ENCODE measurements at regions of chr12 and their contacts with region 1.

Region 1: GRCh38 chr12:6278439-6279255 is 31.8 kb upstream of the PLEKHG6 start:
- DNase-seq: peak; percentile 74
- ATAC-seq: peak; percentile 81
- H3K4me3 ChIP-seq: peak overlapping the region; percentile 56
- H3K27ac ChIP-seq: peak overlapping the region; percentile 78
- H3K4me1 ChIP-seq: peaks cover 31% of the 10 kb centered on the region
- H3K27me3 ChIP-seq: no peaks in the 10 kb centered on the region
- CTCF ChIP-seq: peak; percentile 92
- POLR2A ChIP-seq: peak; percentile 50; the same call in 1 of the 2 replicates
- RAD21 ChIP-seq: peak; percentile 83

Region 2: DNA sequence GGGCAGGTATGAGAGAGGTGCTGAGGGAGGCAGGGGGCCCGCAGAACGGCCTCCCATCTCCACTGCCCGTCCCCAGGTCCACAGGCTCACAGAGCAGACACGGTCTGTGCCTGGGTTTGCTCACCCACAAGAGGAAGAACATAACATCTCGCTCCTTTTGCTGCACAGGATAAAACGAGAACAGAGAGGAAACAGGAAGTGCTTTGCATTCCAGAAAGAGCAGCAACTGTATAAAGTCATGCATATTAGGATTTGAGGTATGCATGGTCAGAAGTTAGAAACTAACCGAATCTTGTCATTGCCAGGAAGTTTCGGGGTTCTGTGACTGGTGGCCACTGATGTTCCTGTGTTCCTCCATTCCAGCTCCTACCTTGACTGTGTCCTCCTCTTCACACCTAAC is 821.7 kb before region 1 on chr12:
- CTCF ChIA-PET with region 1: no interaction called
- POLR2A ChIA-PET with region 1: no interaction called
- dilution Hi-C with region 1: no loop called
- in situ Hi-C with region 1: loop called (anchors 25 kb)
- intact Hi-C with region 1: no loop called
- DNase-seq: peak; percentile 82
- ATAC-seq: peak; percentile 94
- H3K4me3 ChIP-seq: no peak overlapping the region
- H3K27ac ChIP-seq: peak overlapping the region; percentile 98
- H3K4me1 ChIP-seq: peaks cover 47% of the 10 kb centered on the region
- H3K27me3 ChIP-seq: no peaks in the 10 kb centered on the region
- CTCF ChIP-seq: no peak
- POLR2A ChIP-seq: no peak
- RAD21 ChIP-seq: no peak

Region 3: DNA sequence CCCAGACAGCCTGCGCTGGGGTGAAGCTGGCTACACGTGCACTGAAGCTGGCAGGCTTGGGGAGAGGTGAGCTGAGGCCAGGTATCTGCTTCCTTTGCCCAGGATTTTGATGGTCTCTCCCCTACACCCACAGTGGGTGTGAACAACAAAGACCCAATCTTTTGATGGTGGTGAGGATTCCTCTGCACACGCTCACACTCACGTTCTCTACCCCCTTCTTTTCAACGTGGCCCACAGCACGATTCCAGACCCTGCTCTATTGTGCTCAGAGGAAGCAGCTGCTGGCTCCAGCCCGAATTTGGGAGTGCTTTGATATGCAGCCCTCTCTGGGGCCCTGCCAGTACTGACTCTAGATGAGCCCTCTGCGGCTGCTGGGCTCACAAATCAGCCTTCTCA is 73.5 kb before region 1 on chr12:
- CTCF ChIA-PET with region 1: interaction called, 8 read pairs
- POLR2A ChIA-PET with region 1: no interaction called
- dilution Hi-C with region 1: no loop called
- in situ Hi-C with region 1: loop called (anchors 5 kb)
- intact Hi-C with region 1: no loop called
- DNase-seq: no peak
- ATAC-seq: no peak
- H3K4me3 ChIP-seq: no peak overlapping the region
- H3K27ac ChIP-seq: no peak overlapping the region
- H3K4me1 ChIP-seq: peaks cover 14% of the 10 kb centered on the region
- H3K27me3 ChIP-seq: no peaks in the 10 kb centered on the region
- CTCF ChIP-seq: no peak
- POLR2A ChIP-seq: no peak
- RAD21 ChIP-seq: no peak

Region 4: DNA sequence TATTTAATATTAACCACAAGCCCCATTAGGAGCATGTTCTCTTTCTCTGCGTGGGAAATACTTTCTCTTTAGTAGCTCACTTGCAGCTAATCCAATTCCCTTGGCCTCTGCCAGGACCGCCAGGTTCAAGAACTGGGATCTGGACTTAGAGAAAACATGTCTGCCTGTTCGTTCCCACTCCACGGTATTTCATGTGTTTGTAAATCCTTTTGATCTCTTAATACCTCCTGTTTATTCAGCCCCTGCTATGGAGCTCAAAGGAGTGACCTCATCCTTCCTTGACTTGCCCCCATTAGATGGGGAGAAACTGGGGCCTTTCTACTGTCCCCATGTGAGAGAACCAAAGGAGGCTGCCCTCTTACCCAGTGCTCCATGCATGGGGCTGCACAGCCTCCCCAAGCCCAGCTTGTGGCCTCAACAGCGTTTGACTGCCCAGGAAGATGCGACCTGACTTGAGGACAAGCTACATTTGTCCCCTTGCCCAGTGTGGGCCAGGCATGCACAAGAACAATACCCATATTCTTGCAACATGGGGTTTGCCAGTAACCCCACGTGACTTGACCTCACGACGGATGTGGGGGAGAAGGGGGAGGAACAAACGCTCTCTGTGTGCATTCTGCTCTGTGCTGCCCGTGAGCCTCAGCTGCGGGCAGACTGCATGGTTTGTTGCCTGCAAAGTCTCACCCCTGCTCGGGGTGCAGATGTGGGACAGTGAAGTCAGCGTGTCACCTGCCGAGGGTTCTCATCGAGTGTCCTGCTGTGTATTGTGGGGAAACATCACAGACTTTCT is 48.1 kb before region 1 on chr12:
- CTCF ChIA-PET with region 1: interaction called, 3 read pairs
- POLR2A ChIA-PET with region 1: no interaction called
- dilution Hi-C with region 1: no loop called
- in situ Hi-C with region 1: no loop called
- intact Hi-C with region 1: loop called (anchors 2 kb)
- DNase-seq: no peak
- ATAC-seq: peak; percentile 10
- H3K4me3 ChIP-seq: no peak overlapping the region
- H3K27ac ChIP-seq: peak overlapping the region; percentile 52
- H3K4me1 ChIP-seq: peaks cover 35% of the 10 kb centered on the region
- H3K27me3 ChIP-seq: no peaks in the 10 kb centered on the region
- CTCF ChIP-seq: no peak
- POLR2A ChIP-seq: 0 out of 2 replicates have a peak, but pooled peaks have one; percentile 5
- RAD21 ChIP-seq: no peak

Region 5: GRCh38 chr12:6307529-6307928 is 28.9 kb after region 1 on chr12:
- CTCF ChIA-PET with region 1: no interaction called
- POLR2A ChIA-PET with region 1: no interaction called
- dilution Hi-C with region 1: no loop called
- in situ Hi-C with region 1: no loop called
- intact Hi-C with region 1: no loop called
- DNase-seq: no peak
- ATAC-seq: no peak
- H3K4me3 ChIP-seq: no peak overlapping the region
- H3K27ac ChIP-seq: no peak overlapping the region
- H3K4me1 ChIP-seq: peaks cover under 1% of the 10 kb centered on the region; the same call in 1 of the 2 replicates
- H3K27me3 ChIP-seq: peaks cover 30% of the 10 kb centered on the region
- CTCF ChIP-seq: no peak
- POLR2A ChIP-seq: no peak
- RAD21 ChIP-seq: no peak

Measured in IMR-90 (cell line).